Gastrocnemius medialis (tissue), 4 donors: ENCODE measurements at regions of chr12 and their contacts with region 1.

Region 1: DNA sequence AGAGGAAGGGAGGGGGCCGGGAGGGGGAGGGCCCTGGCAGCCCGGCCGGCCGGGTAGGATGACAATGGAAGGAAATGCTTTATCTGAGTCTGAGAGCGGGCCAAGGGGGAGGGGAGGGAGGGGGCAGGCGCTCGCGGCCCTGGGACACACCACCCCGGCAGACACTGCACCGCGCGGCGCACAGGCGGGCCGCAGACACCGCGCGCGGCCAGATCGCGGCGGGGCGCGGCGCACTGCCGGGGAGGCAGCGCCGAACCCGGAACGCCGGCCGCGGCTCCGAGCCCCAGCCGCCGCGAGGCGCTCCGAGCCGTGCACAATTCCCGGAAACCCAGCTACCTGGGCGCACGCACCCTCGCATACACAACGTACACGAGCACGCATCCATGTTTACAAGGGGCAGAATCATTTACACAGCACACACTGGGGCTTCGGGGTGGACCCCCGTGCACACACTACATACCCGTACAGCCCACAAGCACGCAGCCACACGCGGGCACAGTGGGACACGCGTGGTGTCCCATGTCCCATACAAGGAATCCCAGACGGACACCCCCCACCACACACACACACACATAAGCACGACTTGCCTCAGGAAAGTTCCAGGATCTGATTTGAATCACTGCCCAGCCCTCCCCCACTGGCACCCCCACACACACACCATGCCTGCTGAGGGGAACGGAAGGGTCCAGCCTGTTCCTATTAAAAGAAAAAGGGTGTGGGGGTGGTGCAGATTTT is at the start of gene HDAC7:
- DNase-seq: peak; percentile 76 to 85
- ATAC-seq: peak; percentile 68 to 74
- H3K4me3 ChIP-seq: peak within 1 kb of the TSS; percentile 69 to 89 (median 81)
- H3K27ac ChIP-seq: peak within 1 kb of the TSS; percentile 85 to 94 (median 92)
- H3K4me1 ChIP-seq: peaks cover 62 to 81% of the 10 kb centered on the region in 2 donors
- H3K27me3 ChIP-seq: no peaks in the 10 kb centered on the region
- CTCF ChIP-seq: peak in 2 of 5 experiments; percentile 16 to 23
- POLR2A ChIP-seq: peak; percentile 64 to 68
- total RNA-seq, gene HDAC7: 12.2 to 27.1 (median 17.0) TPM

Region 2: DNA sequence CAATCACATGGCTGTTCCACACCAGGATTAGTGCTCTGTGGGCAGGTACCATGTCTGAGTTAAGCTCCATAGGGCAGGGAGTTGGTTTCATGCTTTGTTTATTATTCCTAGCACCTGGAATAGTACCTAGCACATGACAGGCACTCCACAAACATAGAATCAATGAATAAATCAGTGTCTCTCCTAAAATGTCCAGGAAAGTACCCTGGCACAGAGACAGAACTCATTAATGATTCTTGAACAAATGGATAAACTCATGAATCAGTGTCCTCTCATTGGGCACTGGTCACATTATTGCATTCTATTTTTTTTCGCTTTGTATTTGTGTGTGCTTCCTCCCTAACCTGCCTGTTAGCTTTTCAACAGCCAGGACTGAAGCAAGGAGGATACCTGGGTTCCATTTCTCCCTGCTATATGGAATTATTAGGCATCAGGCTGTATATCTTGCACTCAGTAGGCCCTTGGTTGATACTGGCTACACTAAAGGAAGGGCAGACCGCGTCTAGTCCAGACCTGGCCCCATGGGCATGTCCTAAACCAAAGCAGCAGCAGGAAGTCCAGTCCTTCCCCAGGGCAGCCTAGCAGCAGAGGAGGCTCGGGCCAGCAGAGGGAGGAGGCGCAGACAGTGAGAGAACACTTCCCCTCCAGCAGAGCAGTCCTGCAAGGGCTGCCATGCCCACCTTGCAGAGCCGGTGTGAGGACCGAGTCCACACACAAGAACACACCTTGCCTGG is 18.7 kb before region 1 on chr12:
- in situ Hi-C with region 1: no loop called
- intact Hi-C with region 1: loop called (anchors 2 kb)
- DNase-seq: no peak
- ATAC-seq: no peak
- H3K4me3 ChIP-seq: no peak overlapping the region
- H3K27ac ChIP-seq: peak overlapping the region; percentile 33 to 86 (median 82)
- H3K4me1 ChIP-seq: peaks cover 80 to 88% of the 10 kb centered on the region in 2 donors
- H3K27me3 ChIP-seq: no peaks in the 10 kb centered on the region
- CTCF ChIP-seq: no peak
- POLR2A ChIP-seq: no peak

Region 3: GRCh38 chr12:47949441-47950308 is 129.6 kb after region 1 on chr12:
- in situ Hi-C with region 1: no loop called
- intact Hi-C with region 1: no loop called
- DNase-seq: peak; percentile 29 to 58
- ATAC-seq: peak in 1 of 2 donors; percentile 81
- H3K4me3 ChIP-seq: no peak overlapping the region
- H3K27ac ChIP-seq: no peak overlapping the region
- H3K4me1 ChIP-seq: no peaks in the 10 kb centered on the region
- H3K27me3 ChIP-seq: no peaks in the 10 kb centered on the region
- CTCF ChIP-seq: peak; percentile 66 to 76 (median 72)
- POLR2A ChIP-seq: no peak